CD14-positive monocyte (primary cell): ENCODE measurements at regions of chr5 and their contacts with region 1.

Region 1: DNA sequence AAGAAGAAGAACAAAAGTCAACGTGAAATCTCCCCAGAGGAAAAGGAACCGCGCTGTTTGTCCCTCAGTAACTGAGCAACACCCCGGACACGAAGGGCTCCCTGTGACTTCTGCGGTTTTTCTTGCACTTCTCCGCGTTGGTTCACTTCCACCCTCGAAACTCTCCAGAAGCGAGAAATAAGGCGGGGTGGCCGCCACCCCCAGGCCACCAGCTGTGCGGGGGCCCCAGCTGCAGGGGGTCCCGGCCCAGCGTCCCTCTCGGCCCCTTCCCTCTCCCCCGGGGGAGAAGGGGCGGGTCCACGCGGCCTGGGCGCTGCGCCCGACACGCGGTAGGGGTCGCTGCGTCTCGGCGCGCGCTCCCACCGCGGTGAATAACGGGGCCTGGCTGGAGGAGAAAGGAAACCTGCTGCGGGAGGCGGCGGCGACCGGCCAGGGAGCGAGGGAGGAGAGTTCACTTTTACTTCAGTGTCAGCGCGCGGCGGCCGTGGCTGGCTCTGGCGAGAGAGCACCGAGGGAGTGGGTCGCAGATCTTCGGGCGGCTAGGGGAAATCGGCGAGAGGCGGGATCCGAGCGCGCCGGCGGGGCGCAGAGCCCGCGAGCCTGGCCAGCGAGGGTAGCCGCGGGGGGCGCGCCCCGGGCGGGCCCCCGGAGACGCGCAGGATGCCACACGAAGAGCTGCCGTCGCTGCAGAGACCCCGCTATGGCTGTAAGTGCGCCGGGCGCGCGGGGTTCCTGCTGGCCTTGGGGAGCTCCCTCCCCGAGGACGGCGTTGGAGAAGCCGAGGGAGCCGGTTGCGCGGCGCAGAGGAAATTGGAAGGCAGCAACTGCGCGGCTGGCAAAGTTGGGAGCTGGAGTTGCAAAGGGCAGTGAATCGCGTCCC is at the start of gene IQGAP2:
- DNase-seq: peak; percentile 24 to 94 (median 93)
- H3K4me3 ChIP-seq: peak within 1 kb of the TSS; percentile 76 to 94 (median 80)
- H3K4me3 Mint-ChIP-seq: peak within 1 kb of the TSS; percentile 97 to 98
- H3K27ac ChIP-seq: peak within 1 kb of the TSS; percentile 97 to 98
- H3K27ac Mint-ChIP-seq: peak within 1 kb of the TSS; percentile 99 to 100 (median 100)
- H3K4me1 ChIP-seq: peaks cover 56 to 69% of the 10 kb centered on the region in 2 donors
- H3K4me1 Mint-ChIP-seq: peaks cover 61% of the 10 kb centered on the region
- H3K27me3 ChIP-seq: no peaks in the 10 kb centered on the region
- H3K27me3 Mint-ChIP-seq: peaks cover 0 to 3% (median 0%) of the 10 kb centered on the region in 3 donors
- CTCF ChIP-seq: peak; percentile 81
- polyA plus RNA-seq, gene IQGAP2: 21.4 to 50.9 (median 35.4) TPM

Region 2: DNA sequence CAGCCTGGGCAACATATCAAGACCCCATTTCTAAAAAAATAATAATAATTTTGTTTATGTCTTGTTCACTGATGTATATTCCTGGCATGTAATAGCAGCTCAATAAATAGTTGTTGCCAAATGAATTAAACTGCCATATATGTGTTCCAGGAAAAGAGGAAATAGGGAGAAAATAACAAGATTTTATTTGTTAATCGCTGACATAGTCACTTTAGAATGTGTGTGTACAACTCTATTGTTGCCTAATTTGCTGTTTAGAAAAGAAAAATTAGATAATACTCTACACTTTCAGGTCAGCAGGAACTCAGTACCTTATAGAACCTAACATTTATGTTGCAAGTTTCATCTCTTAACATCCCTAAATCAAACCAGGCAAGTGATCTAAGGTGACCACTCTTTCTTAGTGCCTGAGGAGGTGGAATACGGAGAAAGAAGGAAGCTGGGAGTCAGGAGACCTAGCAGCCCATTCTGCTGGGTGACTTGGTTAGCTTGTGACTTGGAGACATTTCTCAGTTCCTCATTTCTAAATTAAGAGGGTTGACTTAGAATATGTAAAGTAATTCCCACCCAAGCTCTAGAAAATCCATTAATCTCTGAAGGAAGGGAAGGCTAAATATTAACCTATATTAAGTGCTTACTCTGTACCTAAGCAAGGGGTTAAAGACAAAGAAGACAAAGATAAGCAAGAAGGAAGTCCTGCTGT is 110.4 kb before region 1 on chr5:
- intact Hi-C with region 1: loop called in 1 of 2 experiments (anchors 10 kb)
- DNase-seq: peak; percentile 78 to 91 (median 91)
- H3K4me3 ChIP-seq: peak overlapping the region in 1 of 3 experiments; percentile 34
- H3K4me3 Mint-ChIP-seq: peak overlapping the region in 1 of 2 donors; percentile 12
- H3K27ac ChIP-seq: peak overlapping the region; percentile 19 to 80
- H3K27ac Mint-ChIP-seq: peak overlapping the region; percentile 84 to 94 (median 91)
- H3K4me1 ChIP-seq: peaks cover 39 to 40% of the 10 kb centered on the region in 2 donors
- H3K4me1 Mint-ChIP-seq: peaks cover 39% of the 10 kb centered on the region
- H3K27me3 ChIP-seq: no peaks in the 10 kb centered on the region
- H3K27me3 Mint-ChIP-seq: no peaks in the 10 kb centered on the region
- CTCF ChIP-seq: no peak

Region 3: GRCh38 chr5:76337953-76338451 is 65.1 kb before region 1 on chr5:
- intact Hi-C with region 1: loop called in 1 of 2 experiments (anchors 5 kb)
- DNase-seq: peak; percentile 39 to 56 (median 47)
- H3K4me3 ChIP-seq: no peak overlapping the region
- H3K4me3 Mint-ChIP-seq: no peak overlapping the region
- H3K27ac ChIP-seq: no peak overlapping the region
- H3K27ac Mint-ChIP-seq: no peak overlapping the region
- H3K4me1 ChIP-seq: peaks cover 23 to 27% of the 10 kb centered on the region in 2 donors
- H3K4me1 Mint-ChIP-seq: peaks cover 32% of the 10 kb centered on the region
- H3K27me3 ChIP-seq: no peaks in the 10 kb centered on the region
- H3K27me3 Mint-ChIP-seq: peaks cover 0 to 3% (median 2%) of the 10 kb centered on the region in 3 donors
- CTCF ChIP-seq: peak; percentile 64

Region 4: DNA sequence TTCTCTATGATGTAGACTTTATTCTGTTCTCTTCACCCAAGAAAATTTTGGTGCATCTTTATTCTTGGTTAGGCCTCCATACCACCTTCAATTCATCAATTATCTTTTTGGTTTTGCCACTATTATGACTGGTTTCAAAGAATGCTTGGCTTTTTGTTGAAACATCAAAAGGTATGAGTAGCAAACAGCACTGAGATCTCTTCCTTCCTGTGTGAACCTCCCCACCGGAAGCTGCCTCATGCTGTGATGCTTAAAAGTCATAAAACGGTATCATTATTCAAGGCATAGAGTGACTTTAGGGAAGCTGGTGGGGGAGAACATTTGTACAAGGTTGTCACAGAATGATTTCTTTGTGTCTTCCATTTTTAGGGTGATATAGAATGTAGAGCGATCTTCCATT is 70.5 kb after region 1 on chr5:
- intact Hi-C with region 1: loop called (anchors 5 to 10 kb)
- DNase-seq: peak; percentile 44 to 75 (median 52)
- H3K4me3 ChIP-seq: no peak overlapping the region
- H3K4me3 Mint-ChIP-seq: no peak overlapping the region
- H3K27ac ChIP-seq: peak overlapping the region in 1 of 2 donors; percentile 57
- H3K27ac Mint-ChIP-seq: peak overlapping the region; percentile 19 to 93 (median 66)
- H3K4me1 ChIP-seq: peaks cover 23 to 47% of the 10 kb centered on the region in 2 donors
- H3K4me1 Mint-ChIP-seq: peaks cover 58% of the 10 kb centered on the region
- H3K27me3 ChIP-seq: no peaks in the 10 kb centered on the region
- H3K27me3 Mint-ChIP-seq: peaks cover 0 to 1% (median 0%) of the 10 kb centered on the region in 3 donors
- CTCF ChIP-seq: no peak

Region 5: DNA sequence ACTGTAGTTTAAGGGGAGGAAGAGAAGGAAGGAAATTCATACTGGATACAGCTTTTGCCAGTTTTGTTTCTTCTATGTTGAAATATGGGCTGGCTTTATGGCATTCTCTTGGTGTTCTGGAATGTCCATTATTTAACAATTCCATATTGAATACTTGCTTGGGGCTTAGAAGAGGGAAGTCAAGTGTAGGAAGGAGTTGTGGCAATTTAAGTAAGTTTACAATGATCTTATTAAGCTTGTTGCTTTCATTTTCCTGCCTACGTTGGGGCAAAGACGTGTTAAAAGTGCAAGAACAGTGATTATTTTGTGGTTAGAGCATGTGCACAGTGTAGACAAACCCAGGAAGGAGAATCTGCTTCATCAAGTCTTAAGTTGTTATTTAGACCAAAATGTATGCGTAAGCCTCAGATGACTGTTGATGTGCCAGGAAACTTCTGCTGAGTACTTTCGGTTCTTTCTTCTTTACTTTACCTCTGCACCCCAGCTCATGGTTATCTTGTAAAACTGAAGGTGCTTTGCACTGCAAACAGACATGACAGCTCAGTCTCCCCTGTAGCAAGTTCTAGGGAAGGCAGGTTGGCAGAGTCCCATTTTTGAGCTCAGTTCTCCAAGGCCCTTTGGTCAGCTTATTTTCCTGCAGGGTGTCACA is 144.2 kb after region 1 on chr5:
- intact Hi-C with region 1: loop called in 1 of 2 experiments (anchors 1 kb)
- DNase-seq: peak; percentile 77 to 90 (median 82)
- H3K4me3 ChIP-seq: peak overlapping the region; percentile 9 to 56 (median 49)
- H3K4me3 Mint-ChIP-seq: peak overlapping the region; percentile 64 to 91
- H3K27ac ChIP-seq: peak overlapping the region; percentile 33 to 81
- H3K27ac Mint-ChIP-seq: peak overlapping the region; percentile 90 to 98 (median 94)
- H3K4me1 ChIP-seq: peaks cover 47 to 49% of the 10 kb centered on the region in 2 donors
- H3K4me1 Mint-ChIP-seq: peaks cover 55% of the 10 kb centered on the region
- H3K27me3 ChIP-seq: no peaks in the 10 kb centered on the region
- H3K27me3 Mint-ChIP-seq: peaks cover 0 to 2% (median 0%) of the 10 kb centered on the region in 3 donors
- CTCF ChIP-seq: no peak

Region 6: DNA sequence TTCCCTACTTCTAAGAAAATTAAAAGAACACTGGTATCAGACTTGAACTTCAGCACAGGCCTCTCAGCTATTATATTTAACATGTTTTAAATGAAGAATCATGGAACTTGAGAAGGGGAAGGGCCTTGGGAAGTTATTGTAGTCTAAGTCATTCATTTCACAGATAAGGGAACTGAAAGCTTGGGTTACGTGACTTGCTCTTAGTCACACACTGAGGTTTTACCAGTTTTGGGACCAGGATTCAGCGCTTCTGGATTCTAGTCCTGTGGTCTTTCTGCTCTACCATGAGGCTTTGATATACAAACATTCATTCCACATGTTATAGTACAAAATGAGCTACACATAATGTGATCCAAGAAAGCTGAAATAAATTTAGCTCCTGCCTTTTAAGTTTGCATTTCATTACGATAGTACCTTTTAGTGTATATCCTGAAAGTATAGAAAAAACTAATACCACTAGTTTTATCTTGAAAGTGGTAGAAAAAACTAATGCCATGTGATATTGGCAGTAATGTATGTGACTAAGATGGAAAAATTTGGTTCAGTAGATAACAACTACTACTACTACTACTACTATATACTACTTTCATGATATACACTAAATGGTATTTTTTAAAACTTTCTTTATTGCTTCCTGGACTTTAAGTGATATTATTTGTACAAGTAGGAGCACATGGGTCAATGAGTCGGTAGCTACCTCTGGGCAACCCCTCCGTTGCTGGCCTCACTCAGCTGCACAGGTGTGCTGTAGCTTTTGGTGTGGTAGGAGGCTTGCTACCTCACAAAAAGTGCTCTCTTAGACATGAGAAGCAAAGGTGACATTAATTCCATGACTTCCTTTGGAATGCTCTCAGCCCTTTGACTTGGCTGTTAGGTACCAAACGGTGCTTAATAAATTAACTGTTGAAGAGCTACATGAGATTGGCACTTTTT is 179.4 kb after region 1 on chr5:
- intact Hi-C with region 1: loop called in 1 of 2 experiments (anchors 10 kb)
- DNase-seq: peak; percentile 86 to 96 (median 94)
- H3K4me3 ChIP-seq: peak overlapping the region in 1 of 3 experiments; percentile 7
- H3K4me3 Mint-ChIP-seq: no peak overlapping the region
- H3K27ac ChIP-seq: peak overlapping the region; percentile 17 to 52
- H3K27ac Mint-ChIP-seq: peak overlapping the region; percentile 44 to 84 (median 70)
- H3K4me1 ChIP-seq: peaks cover 18 to 21% of the 10 kb centered on the region in 2 donors
- H3K4me1 Mint-ChIP-seq: peaks cover 29% of the 10 kb centered on the region
- H3K27me3 ChIP-seq: no peaks in the 10 kb centered on the region
- H3K27me3 Mint-ChIP-seq: peaks cover 0 to 1% (median 0%) of the 10 kb centered on the region in 3 donors
- CTCF ChIP-seq: no peak